Caco-2 (cell line): ENCODE measurements at regions of chr1 and their contacts with region 1.

Region 1: GRCh38 chr1:31065310-31066217 is at the start of gene PUM1:
- DNase-seq: peak; percentile 97 to 98
- H3K4me3 ChIP-seq: peak within 1 kb of the TSS; percentile 83
- H3K4me3 Mint-ChIP-seq: peak within 1 kb of the TSS; percentile 94
- H3K27ac Mint-ChIP-seq: peak within 1 kb of the TSS; percentile 97
- H3K4me1 ChIP-seq: peaks cover 15% of the 10 kb centered on the region; the same call in 1 of the 2 replicates
- H3K4me1 Mint-ChIP-seq: no peaks in the 10 kb centered on the region
- H3K27me3 ChIP-seq: no peaks in the 10 kb centered on the region
- H3K27me3 Mint-ChIP-seq: no peaks in the 10 kb centered on the region
- CTCF ChIP-seq: no peak
- total RNA-seq, gene PUM1: 92.3 and 93.7 TPM in 2 replicates

Region 2: GRCh38 chr1:31155216-31155841 is 89.8 kb after region 1 on chr1:
- CTCF ChIA-PET with region 1: no interaction called
- POLR2A ChIA-PET with region 1: interaction called, 4 read pairs
- intact Hi-C with region 1: loop called (anchors 1 kb)
- DNase-seq: peak; percentile 84 to 85
- H3K4me3 ChIP-seq: peak overlapping the region; percentile 39
- H3K4me3 Mint-ChIP-seq: peak overlapping the region; percentile 84
- H3K27ac Mint-ChIP-seq: peak overlapping the region; percentile 80
- H3K4me1 ChIP-seq: peaks cover 12% of the 10 kb centered on the region
- H3K4me1 Mint-ChIP-seq: peaks cover 12% of the 10 kb centered on the region
- H3K27me3 ChIP-seq: no peaks in the 10 kb centered on the region
- H3K27me3 Mint-ChIP-seq: no peaks in the 10 kb centered on the region
- CTCF ChIP-seq: peak; percentile 2 to 20